GM12878 (cell line): ENCODE measurements at regions of chr19 and their contacts with region 1.

Region 1: GRCh38 chr19:3821857-3822364 is 35.7 kb upstream of the MATK start:
- DNase-seq: no peak
- ATAC-seq: peak; percentile 91
- H3K4me3 ChIP-seq: no peak overlapping the region
- H3K27ac ChIP-seq: no peak overlapping the region
- H3K4me1 ChIP-seq: no peaks in the 10 kb centered on the region
- H3K27me3 ChIP-seq: no peaks in the 10 kb centered on the region
- CTCF ChIP-seq: peak; percentile 83 to 99 (median 92)
- EP300 ChIP-seq: no peak
- POLR2A ChIP-seq: no peak
- RAD21 ChIP-seq: peak; percentile 66

Region 2: GRCh38 chr19:3762501-3763459 is 59.1 kb before region 1 on chr19 and contains the start of gene MRPL54:
- CTCF ChIA-PET with region 1: interaction called, 13 read pairs
- POLR2A ChIA-PET with region 1: no interaction called
- RAD21 ChIA-PET with region 1: interaction called, 5 read pairs
- SMC1A ChIA-PET with region 1: interaction called, 3 read pairs
- in situ Hi-C with region 1: no loop called
- intact Hi-C with region 1: no loop called
- DNase-seq: peak; percentile 97
- ATAC-seq: peak; percentile 89
- H3K4me3 ChIP-seq: peak within 1 kb of the TSS; percentile 91
- H3K27ac ChIP-seq: peak within 1 kb of the TSS; percentile 100
- H3K4me1 ChIP-seq: peaks cover 4% of the 10 kb centered on the region; the same call in 1 of the 2 replicates
- H3K27me3 ChIP-seq: no peaks in the 10 kb centered on the region
- CTCF ChIP-seq: no peak
- EP300 ChIP-seq: no peak
- POLR2A ChIP-seq: peak; percentile 97
- RAD21 ChIP-seq: no peak
- polyA plus RNA-seq, gene MRPL54: 3.1 to 14.9 TPM

Region 3: DNA sequence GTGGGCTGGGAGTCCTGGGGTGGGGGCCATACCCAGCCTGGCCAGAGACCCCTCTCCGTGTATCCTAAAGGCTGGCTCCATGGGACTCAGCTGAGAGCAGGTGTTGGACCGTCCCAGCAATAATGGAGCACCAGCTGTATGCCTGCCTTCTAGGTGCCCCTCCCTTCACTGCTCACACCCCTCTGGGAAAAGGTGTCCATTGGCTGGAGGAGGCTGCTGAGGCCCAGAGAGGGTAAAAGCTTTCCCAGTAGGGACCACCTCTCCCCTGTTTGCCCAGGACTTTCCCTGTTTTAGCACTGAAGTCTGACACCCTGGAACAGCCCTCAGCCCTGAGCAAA is 46.6 kb before region 1 on chr19:
- CTCF ChIA-PET with region 1: no interaction called
- POLR2A ChIA-PET with region 1: no interaction called
- RAD21 ChIA-PET with region 1: no interaction called
- SMC1A ChIA-PET with region 1: no interaction called
- in situ Hi-C with region 1: no loop called
- intact Hi-C with region 1: no loop called
- DNase-seq: no peak
- ATAC-seq: no peak
- H3K4me3 ChIP-seq: no peak overlapping the region
- H3K27ac ChIP-seq: no peak overlapping the region
- H3K4me1 ChIP-seq: no peaks in the 10 kb centered on the region
- H3K27me3 ChIP-seq: no peaks in the 10 kb centered on the region
- CTCF ChIP-seq: no peak
- EP300 ChIP-seq: no peak
- POLR2A ChIP-seq: no peak
- RAD21 ChIP-seq: no peak

Region 4: GRCh38 chr19:3809881-3810707 is 11.8 kb before region 1 on chr19:
- CTCF ChIA-PET with region 1: interaction called, 11 read pairs
- POLR2A ChIA-PET with region 1: no interaction called
- RAD21 ChIA-PET with region 1: no interaction called
- SMC1A ChIA-PET with region 1: no interaction called
- in situ Hi-C with region 1: no loop called
- intact Hi-C with region 1: no loop called
- DNase-seq: no peak
- ATAC-seq: peak; percentile 74
- H3K4me3 ChIP-seq: no peak overlapping the region
- H3K27ac ChIP-seq: 0 out of 2 replicates have a peak overlapping the region, but pooled peaks have one; percentile 10
- H3K4me1 ChIP-seq: peaks cover 14% of the 10 kb centered on the region
- H3K27me3 ChIP-seq: no peaks in the 10 kb centered on the region
- CTCF ChIP-seq: no peak
- EP300 ChIP-seq: no peak
- POLR2A ChIP-seq: no peak; the same call in 1 of the 2 replicates
- RAD21 ChIP-seq: no peak